Right cardiac atrium (tissue), 5 donors: ENCODE measurements at regions of chr16 and their contacts with region 1.

Region 1: DNA sequence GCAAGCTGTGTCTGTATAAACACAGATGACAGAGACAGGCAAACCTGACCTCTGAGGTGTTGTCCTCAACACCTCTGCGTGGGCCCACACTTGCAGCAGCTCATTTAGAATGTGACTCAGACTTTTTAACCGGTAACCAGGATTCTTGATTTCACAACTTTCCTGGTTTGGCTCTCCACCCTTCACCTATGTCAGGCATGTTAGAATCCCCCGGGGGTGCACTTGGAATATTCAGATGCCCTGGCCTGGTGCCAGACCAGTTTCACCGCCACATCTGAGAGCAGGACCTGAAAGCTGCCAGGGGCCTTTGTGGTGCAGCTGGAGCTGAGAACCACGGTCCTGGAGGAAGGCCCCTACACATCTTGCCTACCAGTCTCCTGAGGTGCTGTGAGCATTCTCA is 4.8 kb downstream of the DHODH start:
- DNase-seq: peak in 2 of 3 donors; percentile 67 to 77
- ATAC-seq: peak in 1 of 2 donors; percentile 1
- H3K4me3 ChIP-seq: peak overlapping the region; percentile 36
- H3K27ac ChIP-seq: peak overlapping the region; percentile 88
- H3K4me1 ChIP-seq: peaks cover under 1% of the 10 kb centered on the region
- H3K27me3 ChIP-seq: no peaks in the 10 kb centered on the region

Region 2: GRCh38 chr16:72050769-72051464 is 37.5 kb after region 1 on chr16:
- intact Hi-C with region 1: no loop called
- DNase-seq: peak in 2 of 3 donors; percentile 43 to 65
- ATAC-seq: peak; percentile 50 to 59
- H3K4me3 ChIP-seq: no peak overlapping the region
- H3K27ac ChIP-seq: no peak overlapping the region
- H3K4me1 ChIP-seq: peaks cover 5% of the 10 kb centered on the region
- H3K27me3 ChIP-seq: no peaks in the 10 kb centered on the region

Region 3: GRCh38 chr16:72093448-72094265 is 80.3 kb after region 1 on chr16 and contains the starts of genes DHX38 and TXNL4B:
- intact Hi-C with region 1: loop called in 1 of 4 experiments (anchors 10 kb)
- DNase-seq: peak; percentile 94 to 97 (median 95)
- ATAC-seq: peak; percentile 100
- H3K4me3 ChIP-seq: peak within 1 kb of the TSS; percentile 72
- H3K27ac ChIP-seq: peak within 1 kb of the TSS; percentile 95
- H3K4me1 ChIP-seq: peaks cover 3% of the 10 kb centered on the region
- H3K27me3 ChIP-seq: no peaks in the 10 kb centered on the region
- total RNA-seq, gene DHX38: 37.2 to 45.9 (median 43.1) TPM
- total RNA-seq, gene TXNL4B: 4.5 to 7.9 (median 5.4) TPM